ENCODE measurements at regions of chr14 and their contacts with region 1.

Region 1: GRCh38 chr14:35004839-35005238 is 22.0 kb downstream of the SRP54 start:
- DNase-seq: no peak
- H3K4me3 ChIP-seq: no peak overlapping the region
- H3K27ac ChIP-seq: no peak overlapping the region
- H3K4me1 ChIP-seq: no peaks in the 10 kb centered on the region
- H3K27me3 ChIP-seq: no peaks in the 10 kb centered on the region
- CTCF ChIP-seq: no peak

Region 2: DNA sequence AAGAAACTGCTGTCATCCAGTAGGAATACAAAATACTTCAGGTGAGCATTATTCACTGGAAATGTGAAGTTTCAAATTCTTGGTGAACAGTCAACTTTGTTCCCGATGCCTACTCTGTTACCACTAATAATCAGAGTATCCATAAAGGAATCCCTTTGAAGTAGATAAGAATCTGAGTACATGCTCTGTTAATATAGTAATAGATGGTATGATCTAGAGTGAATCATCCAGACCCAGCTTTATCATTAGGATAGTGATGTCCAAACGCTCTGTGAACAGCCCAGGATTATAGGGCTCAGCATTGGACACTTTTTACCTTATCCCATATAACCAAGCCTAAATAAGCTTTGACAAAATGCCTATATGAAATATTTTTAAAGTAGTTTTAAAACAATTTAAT is 83.7 kb after region 1 on chr14:
- CTCF ChIA-PET with region 1: no interaction called
- dilution Hi-C with region 1: loop called (anchors 5 kb)
- in situ Hi-C with region 1: no loop called
- intact Hi-C with region 1: no loop called
- DNase-seq: peak; percentile 11
- H3K4me3 ChIP-seq: no peak overlapping the region
- H3K27ac ChIP-seq: no peak overlapping the region
- H3K4me1 ChIP-seq: no peaks in the 10 kb centered on the region
- H3K27me3 ChIP-seq: no peaks in the 10 kb centered on the region
- CTCF ChIP-seq: no peak

Measured in mammary epithelial cell (primary cell).